ENCODE measurements at regions of chr16 and their contacts with region 1.

Region 1: GRCh38 chr16:57128771-57129389 is 36.5 kb downstream of the CPNE2 start:
- DNase-seq: peak; percentile 85
- H3K4me3 Mint-ChIP-seq: peak overlapping the region; percentile 43
- H3K27ac Mint-ChIP-seq: peak overlapping the region; percentile 87
- H3K4me1 Mint-ChIP-seq: peaks cover 84% of the 10 kb centered on the region
- H3K27me3 Mint-ChIP-seq: no peaks in the 10 kb centered on the region

Region 2: DNA sequence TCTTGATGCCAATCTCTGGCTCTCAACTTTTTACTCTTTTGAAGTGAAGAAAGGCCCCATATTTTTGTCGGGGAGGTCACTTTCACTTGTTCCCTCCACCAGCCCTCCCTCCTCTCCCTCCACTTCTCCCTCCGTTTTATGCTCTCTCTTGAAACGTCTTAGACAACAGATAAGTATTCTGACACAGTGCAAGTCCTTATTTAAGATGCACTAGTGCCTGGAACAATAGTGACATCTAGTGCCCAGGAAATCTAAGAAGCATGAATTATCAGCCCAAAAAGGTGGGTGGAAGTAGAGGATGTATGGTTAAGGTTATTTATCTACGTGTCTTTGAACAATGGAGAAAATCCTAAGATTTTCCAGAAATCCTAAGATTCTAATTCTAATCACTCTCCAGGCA is 39.1 kb after region 1 on chr16:
- CTCF ChIA-PET with region 1: no interaction called
- intact Hi-C with region 1: loop called (anchors 1 kb)
- DNase-seq: no peak
- H3K4me3 Mint-ChIP-seq: no peak overlapping the region
- H3K27ac Mint-ChIP-seq: no peak overlapping the region
- H3K4me1 Mint-ChIP-seq: peaks cover 7% of the 10 kb centered on the region
- H3K27me3 Mint-ChIP-seq: no peaks in the 10 kb centered on the region

Measured in activated naive CD4-positive, alpha-beta T cell treated with anti-CD3 and anti-CD28 coated beads for 36 hours (primary cell).